ENCODE measurements at regions of chr4 and their contacts with region 1.

Region 1: DNA sequence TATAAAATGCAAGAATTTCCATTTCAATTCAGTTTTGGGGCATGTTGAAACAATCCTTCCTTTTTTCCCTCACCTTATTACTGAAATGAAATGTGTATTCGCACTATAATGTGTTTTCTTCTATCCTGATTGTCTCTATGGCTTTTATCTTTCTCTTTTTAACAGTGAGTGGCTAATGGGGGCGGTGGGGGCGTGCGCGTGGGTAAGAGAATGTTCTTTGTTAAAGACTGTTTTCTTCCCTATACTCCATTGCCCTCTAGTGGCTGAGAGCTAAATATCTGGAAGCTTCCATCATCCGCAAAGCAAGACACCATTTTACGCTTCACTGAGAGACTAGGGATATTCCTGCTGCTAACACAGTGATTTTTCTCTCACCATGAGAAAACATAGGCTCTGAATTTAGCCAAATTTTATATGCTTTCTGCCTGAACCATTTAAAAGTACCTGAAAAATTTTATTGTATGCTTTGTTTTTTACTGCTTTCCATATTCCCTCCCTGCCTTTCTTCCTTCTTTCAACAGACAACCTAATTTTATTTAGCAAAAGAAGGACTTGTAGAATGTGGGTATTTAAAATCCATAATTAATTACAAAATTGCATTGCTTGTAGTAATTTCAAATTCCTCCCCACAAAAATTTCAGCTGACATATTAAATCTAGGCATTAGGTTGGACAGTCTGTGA is 194.0 kb downstream of the GASK1B start:
- DNase-seq: no peak
- H3K4me3 ChIP-seq: peak overlapping the region in 1 of 3 donors; percentile 44
- H3K27ac ChIP-seq: no peak overlapping the region
- H3K4me1 ChIP-seq: no peaks in the 10 kb centered on the region
- H3K27me3 ChIP-seq: no peaks in the 10 kb centered on the region
- CTCF ChIP-seq: peak; percentile 78 to 91 (median 80)
- POLR2A ChIP-seq: no peak

Region 2: DNA sequence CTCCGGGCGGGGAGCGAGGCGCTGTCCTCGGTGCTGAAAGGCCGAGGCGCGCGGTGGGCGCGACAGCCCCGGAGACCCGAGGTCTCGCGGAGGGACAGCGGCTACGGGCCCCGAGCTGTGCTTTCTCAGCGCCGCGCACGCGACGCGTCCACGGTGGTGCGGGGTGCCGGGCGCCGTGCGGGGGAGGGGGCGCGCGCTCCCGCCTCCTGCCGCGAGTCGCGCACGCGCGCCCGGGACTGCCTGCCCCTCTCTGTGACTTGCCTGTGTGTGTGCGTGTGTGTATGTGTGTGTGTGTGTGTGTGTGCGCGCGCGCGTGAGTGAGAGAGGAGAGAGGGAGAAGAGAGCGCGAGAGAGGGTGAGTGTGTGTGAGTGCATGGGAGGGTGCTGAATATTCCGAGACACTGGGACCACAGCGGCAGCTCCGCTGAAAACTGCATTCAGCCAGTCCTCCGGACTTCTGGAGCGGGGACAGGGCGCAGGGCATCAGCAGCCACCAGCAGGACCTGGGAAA is 758.4 kb before region 1 on chr4 and contains the start of gene GRIA2:
- intact Hi-C with region 1: loop called (anchors 10 kb)
- DNase-seq: peak in 1 of 2 donors; percentile 70
- H3K4me3 ChIP-seq: peak within 1 kb of the TSS; percentile 1 to 71 (median 51)
- H3K27ac ChIP-seq: no peak within 1 kb of the TSS
- H3K4me1 ChIP-seq: peaks cover 4 to 5% of the 10 kb centered on the region in 2 donors
- H3K27me3 ChIP-seq: peaks cover 0 to 20% of the 10 kb centered on the region in 2 donors
- CTCF ChIP-seq: no peak
- POLR2A ChIP-seq: no peak
- total RNA-seq, gene GRIA2: 2.3 to 4.8 TPM in 2 of 3 donors, not detected in the other

Region 3: GRCh38 chr4:157942017-157942416 is 36.8 kb before region 1 on chr4:
- intact Hi-C with region 1: no loop called
- DNase-seq: no peak
- H3K4me3 ChIP-seq: no peak overlapping the region
- H3K27ac ChIP-seq: no peak overlapping the region
- H3K4me1 ChIP-seq: no peaks in the 10 kb centered on the region
- H3K27me3 ChIP-seq: no peaks in the 10 kb centered on the region
- CTCF ChIP-seq: no peak
- POLR2A ChIP-seq: no peak

Region 4: DNA sequence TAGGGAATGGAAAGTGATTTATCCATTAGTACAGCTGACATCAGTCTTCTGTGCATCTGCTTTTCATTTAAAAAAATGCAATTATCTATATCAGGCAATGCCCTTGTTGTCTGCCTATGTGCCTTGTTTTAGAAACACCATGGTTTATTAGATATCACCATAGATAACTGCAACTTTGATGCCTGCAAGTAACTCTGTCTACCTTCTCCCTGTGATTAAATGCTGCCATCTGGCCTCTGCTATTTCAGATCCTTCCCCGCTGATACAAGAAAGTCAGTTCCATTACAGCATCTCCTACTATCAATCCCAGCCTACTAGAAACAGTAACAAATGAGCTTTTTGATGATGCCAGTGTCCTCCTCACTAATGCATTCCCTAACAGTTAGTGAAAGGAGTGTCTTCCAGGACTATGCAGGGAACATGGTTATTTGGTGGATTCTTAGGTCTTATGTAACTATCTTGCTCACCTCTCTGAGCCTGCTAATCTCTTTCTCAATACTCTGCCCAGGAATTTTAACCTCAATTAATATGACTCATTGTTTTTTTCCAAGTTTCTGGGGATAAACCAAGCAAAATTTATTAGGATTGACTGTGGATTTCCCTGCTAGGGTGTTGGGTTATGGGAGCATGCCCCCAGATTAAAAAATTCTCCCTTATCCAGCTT is 1569.0 kb after region 1 on chr4:
- intact Hi-C with region 1: no loop called
- DNase-seq: no peak
- H3K4me3 ChIP-seq: no peak overlapping the region
- H3K27ac ChIP-seq: no peak overlapping the region
- H3K4me1 ChIP-seq: no peaks in the 10 kb centered on the region
- H3K27me3 ChIP-seq: no peaks in the 10 kb centered on the region
- CTCF ChIP-seq: no peak
- POLR2A ChIP-seq: no peak